MCF 10A (cell line): ENCODE measurements at regions of chr11 and their contacts with region 1.

Region 1: DNA sequence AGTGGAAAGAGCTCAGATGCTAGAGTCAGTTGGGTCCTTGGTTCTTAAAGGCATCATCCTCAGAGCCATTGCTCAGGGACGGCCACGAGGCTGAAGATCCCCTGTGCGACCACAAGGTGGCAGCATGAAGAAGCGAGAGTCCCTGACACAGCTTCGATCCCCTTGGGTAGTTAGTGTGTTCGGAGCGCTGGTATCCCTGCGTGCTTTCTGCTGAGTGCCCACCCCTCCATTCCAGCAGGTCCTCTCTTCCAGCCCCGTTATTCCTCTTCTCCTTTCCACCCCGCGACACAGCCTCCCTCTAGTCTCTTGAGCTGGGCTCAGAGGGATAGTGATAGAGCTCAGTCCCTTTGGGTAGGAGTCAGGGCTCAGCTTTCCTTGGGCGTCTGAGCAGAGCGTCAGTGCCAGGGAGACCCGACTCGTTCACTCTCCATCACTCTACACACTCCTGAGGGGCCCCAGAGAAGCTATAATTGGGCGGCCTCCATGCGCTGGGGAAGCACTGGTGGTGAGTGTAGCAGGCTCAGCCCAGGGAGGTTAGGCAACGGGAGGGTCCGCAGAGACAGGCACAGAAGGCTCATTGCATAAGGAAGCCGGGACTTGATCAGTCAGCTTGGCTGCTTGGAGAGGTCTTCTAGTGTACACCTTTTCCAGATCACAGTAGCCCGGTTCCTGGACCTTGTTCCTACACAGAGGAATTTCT is at the start of gene OR51D1:
- DNase-seq: peak; percentile 65
- H3K4me3 Mint-ChIP-seq: no peak within 1 kb of the TSS
- H3K27ac Mint-ChIP-seq: no peak within 1 kb of the TSS
- H3K4me1 Mint-ChIP-seq: no peaks in the 10 kb centered on the region
- H3K27me3 Mint-ChIP-seq: no peaks in the 10 kb centered on the region
- CTCF ChIP-seq: peak; percentile 81
- total RNA-seq, gene OR51D1: not detected in 2 replicates

Region 2: DNA sequence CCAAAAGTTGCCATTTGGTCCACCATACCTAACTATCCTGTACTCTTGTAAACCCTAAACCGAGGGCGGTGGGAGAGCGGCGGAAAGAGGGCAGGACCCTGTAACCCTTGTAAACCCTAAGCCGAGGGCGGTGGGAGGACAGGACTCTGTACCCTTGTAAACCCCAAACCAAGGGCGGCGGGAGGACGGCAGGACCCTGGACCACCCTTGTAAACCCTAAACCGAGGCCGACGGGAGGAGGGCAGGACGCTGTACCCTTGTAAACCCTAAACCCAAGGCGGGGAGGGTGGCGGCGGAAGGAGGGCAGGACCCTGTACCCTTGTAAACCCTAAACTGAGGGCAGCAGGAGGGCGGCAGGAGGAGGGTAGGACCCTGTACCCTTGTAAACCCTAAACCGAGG is 68.0 kb before region 1 on chr11:
- CTCF ChIA-PET with region 1: no interaction called
- POLR2A ChIA-PET with region 1: no interaction called
- intact Hi-C with region 1: no loop called
- DNase-seq: no peak
- H3K4me3 Mint-ChIP-seq: no peak overlapping the region
- H3K27ac Mint-ChIP-seq: no peak overlapping the region
- H3K4me1 Mint-ChIP-seq: no peaks in the 10 kb centered on the region
- H3K27me3 Mint-ChIP-seq: no peaks in the 10 kb centered on the region
- CTCF ChIP-seq: no peak

Region 3: DNA sequence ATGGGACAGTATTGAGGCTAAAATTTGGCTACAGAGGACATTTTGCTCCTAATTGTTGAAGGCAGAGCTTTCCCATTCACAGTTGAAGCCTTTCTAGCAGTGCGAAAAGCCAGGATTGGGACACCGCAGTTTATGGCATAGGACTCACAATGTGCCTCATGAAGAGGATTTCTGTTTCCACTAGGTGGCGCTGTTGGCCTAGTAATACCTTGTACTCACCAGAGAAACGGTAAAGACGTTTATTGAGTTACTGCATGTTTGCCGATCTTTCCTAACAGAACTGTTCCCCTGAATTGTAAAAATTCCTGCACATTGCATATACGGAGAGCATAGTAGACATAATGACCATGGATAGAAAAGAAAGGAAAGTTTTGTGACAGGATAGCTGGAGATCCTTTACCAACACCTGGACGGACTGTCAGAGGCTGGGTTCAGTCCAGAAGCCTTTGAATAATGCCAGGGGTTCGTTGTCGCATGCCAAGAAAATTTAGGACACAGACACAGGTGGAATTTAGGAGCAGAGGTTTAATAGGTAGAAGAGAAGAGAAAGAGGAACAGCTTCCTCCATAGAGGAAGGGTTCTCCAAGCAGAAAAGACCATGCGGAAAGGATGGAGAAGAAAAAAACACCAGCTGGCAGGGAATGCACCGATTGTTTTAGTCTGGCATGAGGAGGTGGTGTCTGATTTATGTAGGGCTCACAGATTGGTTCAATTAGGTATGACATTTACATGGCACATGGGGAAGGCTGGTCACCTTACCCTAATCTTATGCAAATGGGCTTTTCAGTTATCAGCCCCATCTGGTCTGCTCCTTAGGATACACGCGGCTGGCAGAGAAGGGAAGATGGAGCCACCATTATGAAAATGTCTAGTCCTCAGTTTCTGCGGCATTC is 10.7 kb before region 1 on chr11:
- CTCF ChIA-PET with region 1: interaction called, 122 read pairs
- POLR2A ChIA-PET with region 1: no interaction called
- intact Hi-C with region 1: no loop called
- DNase-seq: peak; percentile 88
- H3K4me3 Mint-ChIP-seq: no peak overlapping the region
- H3K27ac Mint-ChIP-seq: no peak overlapping the region
- H3K4me1 Mint-ChIP-seq: no peaks in the 10 kb centered on the region
- H3K27me3 Mint-ChIP-seq: peaks cover 45% of the 10 kb centered on the region
- CTCF ChIP-seq: peak; percentile 73

Region 4: GRCh38 chr11:4654635-4655369 is 17.7 kb after region 1 on chr11:
- CTCF ChIA-PET with region 1: interaction called, 11 read pairs
- POLR2A ChIA-PET with region 1: no interaction called
- intact Hi-C with region 1: no loop called
- DNase-seq: no peak
- H3K4me3 Mint-ChIP-seq: no peak overlapping the region
- H3K27ac Mint-ChIP-seq: no peak overlapping the region
- H3K4me1 Mint-ChIP-seq: no peaks in the 10 kb centered on the region
- H3K27me3 Mint-ChIP-seq: no peaks in the 10 kb centered on the region
- CTCF ChIP-seq: no peak

Region 5: DNA sequence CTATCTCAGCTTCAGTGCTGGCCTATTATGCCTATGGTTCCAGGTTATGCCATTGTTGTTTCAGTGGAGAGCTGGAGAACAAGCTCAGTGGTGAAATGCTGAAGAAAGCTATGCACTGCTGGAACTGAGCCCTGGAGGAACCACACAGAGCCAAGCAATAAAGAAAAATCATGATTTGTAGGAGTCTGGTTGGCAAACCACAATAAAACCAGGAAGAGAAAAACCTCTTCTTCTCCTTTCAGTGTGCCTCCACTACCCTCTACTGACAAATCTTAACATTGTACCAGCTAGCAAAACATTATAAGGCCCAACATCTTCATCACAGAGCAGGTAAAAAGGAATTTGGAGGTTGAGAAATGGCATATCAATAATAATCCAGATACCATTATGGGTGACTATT is 189.3 kb after region 1 on chr11:
- CTCF ChIA-PET with region 1: interaction called, 21 read pairs
- POLR2A ChIA-PET with region 1: no interaction called
- intact Hi-C with region 1: loop called (anchors 2 kb)
- DNase-seq: no peak
- H3K4me3 Mint-ChIP-seq: no peak overlapping the region
- H3K27ac Mint-ChIP-seq: no peak overlapping the region
- H3K4me1 Mint-ChIP-seq: no peaks in the 10 kb centered on the region
- H3K27me3 Mint-ChIP-seq: peaks cover 12% of the 10 kb centered on the region
- CTCF ChIP-seq: no peak

Region 6: GRCh38 chr11:5004424-5005274 is 367.5 kb after region 1 on chr11:
- CTCF ChIA-PET with region 1: interaction called, 69 read pairs
- POLR2A ChIA-PET with region 1: no interaction called
- intact Hi-C with region 1: loop called (anchors 1 kb)
- DNase-seq: peak; percentile 71
- H3K4me3 Mint-ChIP-seq: no peak overlapping the region
- H3K27ac Mint-ChIP-seq: no peak overlapping the region
- H3K4me1 Mint-ChIP-seq: no peaks in the 10 kb centered on the region
- H3K27me3 Mint-ChIP-seq: peaks cover 42% of the 10 kb centered on the region
- CTCF ChIP-seq: peak; percentile 72